Activated T-helper 2 cell treated with anti-CD3 and anti-CD28 coated beads, Interferon-gamma antibody, Interleukin-2, Interleukin-4, amounts not matched to agents 10 μg/mL and 5 μg/mL and 100 μg/mL, durations not matched to agents 14 hours and 24 hours and 36 hours (primary cell): ENCODE measurements at regions of chr6 and their contacts with region 1.

Region 1: GRCh38 chr6:133973109-133973971 is 20.3 kb downstream of the TBPL1 start:
- DNase-seq: no peak
- H3K4me3 Mint-ChIP-seq: no peak overlapping the region
- H3K27ac Mint-ChIP-seq: peak overlapping the region; percentile 0
- H3K4me1 Mint-ChIP-seq: peaks cover 16% of the 10 kb centered on the region
- H3K27me3 Mint-ChIP-seq: no peaks in the 10 kb centered on the region

Region 2: GRCh38 chr6:133887156-133887879 is 86.0 kb before region 1 on chr6:
- intact Hi-C with region 1: no loop called
- DNase-seq: no peak
- H3K4me3 Mint-ChIP-seq: no peak overlapping the region
- H3K27ac Mint-ChIP-seq: no peak overlapping the region
- H3K4me1 Mint-ChIP-seq: peaks cover 15% of the 10 kb centered on the region
- H3K27me3 Mint-ChIP-seq: peaks cover 73% of the 10 kb centered on the region

Region 3: GRCh38 chr6:133952815-133953633 is 20.3 kb before region 1 on chr6 and contains the start of gene TBPL1:
- intact Hi-C with region 1: loop called (anchors 2 kb)
- DNase-seq: peak; percentile 75
- H3K4me3 Mint-ChIP-seq: peak within 1 kb of the TSS; percentile 94
- H3K27ac Mint-ChIP-seq: peak within 1 kb of the TSS; percentile 88
- H3K4me1 Mint-ChIP-seq: peaks cover 42% of the 10 kb centered on the region
- H3K27me3 Mint-ChIP-seq: peaks cover 12% of the 10 kb centered on the region
- total RNA-seq, gene TBPL1: 29.7 and 31.2 TPM in 2 replicates

Region 4: DNA sequence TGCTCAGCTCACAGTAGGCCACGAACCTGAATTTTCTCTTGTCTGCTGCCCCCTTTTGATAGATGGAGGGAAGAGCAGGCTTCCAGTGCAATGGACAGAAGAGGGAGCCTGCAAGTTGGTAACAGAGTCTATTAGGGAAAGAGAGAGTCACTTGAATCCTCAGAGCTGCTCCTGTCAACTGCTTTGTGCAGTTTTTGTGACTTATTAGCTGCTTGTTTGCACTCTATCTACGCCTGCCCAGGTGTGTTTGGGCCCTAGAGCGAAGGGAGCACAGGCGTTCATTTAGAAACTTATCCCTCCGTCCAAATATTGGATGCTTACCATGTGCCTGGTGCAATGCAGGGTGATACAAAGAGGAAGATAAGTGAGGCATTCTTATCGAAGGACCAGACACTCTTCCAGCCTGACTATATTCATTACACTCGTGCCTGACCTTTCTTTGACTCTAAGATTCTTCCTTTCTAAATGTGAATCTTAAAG is 90.7 kb after region 1 on chr6:
- intact Hi-C with region 1: loop called (anchors 1 kb)
- DNase-seq: peak; percentile 29
- H3K4me3 Mint-ChIP-seq: no peak overlapping the region
- H3K27ac Mint-ChIP-seq: no peak overlapping the region
- H3K4me1 Mint-ChIP-seq: no peaks in the 10 kb centered on the region
- H3K27me3 Mint-ChIP-seq: peaks cover 10% of the 10 kb centered on the region

Region 5: GRCh38 chr6:134097114-134097707 is 123.9 kb after region 1 on chr6:
- intact Hi-C with region 1: loop called (anchors 1 kb)
- DNase-seq: peak; percentile 25
- H3K4me3 Mint-ChIP-seq: no peak overlapping the region
- H3K27ac Mint-ChIP-seq: no peak overlapping the region
- H3K4me1 Mint-ChIP-seq: peaks cover 6% of the 10 kb centered on the region
- H3K27me3 Mint-ChIP-seq: peaks cover 27% of the 10 kb centered on the region

Region 6: GRCh38 chr6:134564705-134565104 is 591.4 kb after region 1 on chr6:
- intact Hi-C with region 1: no loop called
- DNase-seq: no peak
- H3K4me3 Mint-ChIP-seq: no peak overlapping the region
- H3K27ac Mint-ChIP-seq: no peak overlapping the region
- H3K4me1 Mint-ChIP-seq: peaks cover 16% of the 10 kb centered on the region
- H3K27me3 Mint-ChIP-seq: no peaks in the 10 kb centered on the region